Naive thymus-derived CD4-positive, alpha-beta T cell (primary cell): ENCODE measurements at regions of chr1 and their contacts with region 1.

Region 1: GRCh38 chr1:221741711-221742554 is at the start of gene DUSP10:
- DNase-seq: peak; percentile 88 to 100 (median 99)
- ATAC-seq: peak; percentile 91
- H3K4me3 ChIP-seq: peak within 1 kb of the TSS; percentile 85
- H3K4me3 Mint-ChIP-seq: peak within 1 kb of the TSS in 1 of 10 donors; percentile 33
- H3K27ac ChIP-seq: peak within 1 kb of the TSS; percentile 94
- H3K27ac Mint-ChIP-seq: peak within 1 kb of the TSS in 3 of 9 donors; percentile 39 to 83 (median 50)
- H3K4me1 ChIP-seq: peaks cover 9 to 17% of the 10 kb centered on the region in 2 donors
- H3K4me1 Mint-ChIP-seq: peaks cover 0 to 32% (median 21%) of the 10 kb centered on the region in 7 donors
- H3K27me3 ChIP-seq: no peaks in the 10 kb centered on the region
- H3K27me3 Mint-ChIP-seq: no peaks in the 10 kb centered on the region
- total RNA-seq, gene DUSP10: 2.5 to 60.6 (median 19.0) TPM

Region 2: GRCh38 chr1:221435504-221435904 is 306.4 kb before region 1 on chr1:
- CTCF ChIA-PET with region 1: no interaction called
- POLR2A ChIA-PET with region 1: no interaction called
- intact Hi-C with region 1: no loop called
- DNase-seq: peak in 6 of 9 donors; percentile 2 to 47 (median 26)
- ATAC-seq: peak; percentile 74
- H3K4me3 ChIP-seq: no peak overlapping the region
- H3K4me3 Mint-ChIP-seq: no peak overlapping the region
- H3K27ac ChIP-seq: no peak overlapping the region
- H3K27ac Mint-ChIP-seq: no peak overlapping the region
- H3K4me1 ChIP-seq: no peaks in the 10 kb centered on the region
- H3K4me1 Mint-ChIP-seq: peaks cover 0 to 27% (median 7%) of the 10 kb centered on the region in 7 donors
- H3K27me3 ChIP-seq: no peaks in the 10 kb centered on the region
- H3K27me3 Mint-ChIP-seq: peaks cover 2 to 22% (median 17%) of the 10 kb centered on the region in 5 donors

Region 3: GRCh38 chr1:221478050-221478949 is 263.6 kb before region 1 on chr1:
- CTCF ChIA-PET with region 1: interaction called, 4 read pairs
- POLR2A ChIA-PET with region 1: no interaction called
- intact Hi-C with region 1: loop called (anchors 1 kb)
- DNase-seq: peak; percentile 7 to 46 (median 31)
- ATAC-seq: peak; percentile 82
- H3K4me3 ChIP-seq: no peak overlapping the region
- H3K4me3 Mint-ChIP-seq: no peak overlapping the region
- H3K27ac ChIP-seq: no peak overlapping the region
- H3K27ac Mint-ChIP-seq: no peak overlapping the region
- H3K4me1 ChIP-seq: no peaks in the 10 kb centered on the region
- H3K4me1 Mint-ChIP-seq: peaks cover 0 to 5% (median 0%) of the 10 kb centered on the region in 7 donors
- H3K27me3 ChIP-seq: no peaks in the 10 kb centered on the region
- H3K27me3 Mint-ChIP-seq: peaks cover 0 to 15% (median 4%) of the 10 kb centered on the region in 5 donors

Region 4: GRCh38 chr1:221725735-221726672 is 15.9 kb before region 1 on chr1:
- CTCF ChIA-PET with region 1: interaction called, 7 read pairs
- POLR2A ChIA-PET with region 1: interaction called, 62 read pairs
- intact Hi-C with region 1: loop called (anchors 1 kb)
- DNase-seq: peak in 4 of 9 donors; percentile 29 to 47 (median 39)
- ATAC-seq: peak; percentile 61
- H3K4me3 ChIP-seq: peak overlapping the region; percentile 11
- H3K4me3 Mint-ChIP-seq: peak overlapping the region in 9 of 10 donors; percentile 45 to 83 (median 72)
- H3K27ac ChIP-seq: peak overlapping the region; percentile 15
- H3K27ac Mint-ChIP-seq: peak overlapping the region; percentile 16 to 90 (median 74)
- H3K4me1 ChIP-seq: peaks cover 24 to 29% of the 10 kb centered on the region in 2 donors
- H3K4me1 Mint-ChIP-seq: peaks cover 39 to 74% (median 67%) of the 10 kb centered on the region in 7 donors
- H3K27me3 ChIP-seq: no peaks in the 10 kb centered on the region
- H3K27me3 Mint-ChIP-seq: no peaks in the 10 kb centered on the region

Region 5: GRCh38 chr1:221839796-221840395 is 98.0 kb after region 1 on chr1:
- CTCF ChIA-PET with region 1: no interaction called
- POLR2A ChIA-PET with region 1: interaction called, 3 read pairs
- intact Hi-C with region 1: loop called in 1 of 2 experiments (anchors 1 kb)
- DNase-seq: peak in 1 of 9 donors; percentile 55
- ATAC-seq: peak; percentile 89
- H3K4me3 ChIP-seq: no peak overlapping the region
- H3K4me3 Mint-ChIP-seq: peak overlapping the region in 1 of 10 donors; percentile 32
- H3K27ac ChIP-seq: no peak overlapping the region
- H3K27ac Mint-ChIP-seq: peak overlapping the region in 3 of 9 donors; percentile 38 to 49 (median 46)
- H3K4me1 ChIP-seq: peaks cover 0 to 17% of the 10 kb centered on the region in 2 donors
- H3K4me1 Mint-ChIP-seq: peaks cover 9 to 58% (median 13%) of the 10 kb centered on the region in 7 donors
- H3K27me3 ChIP-seq: no peaks in the 10 kb centered on the region
- H3K27me3 Mint-ChIP-seq: peaks cover 0 to 9% (median 4%) of the 10 kb centered on the region in 5 donors

Region 6: DNA sequence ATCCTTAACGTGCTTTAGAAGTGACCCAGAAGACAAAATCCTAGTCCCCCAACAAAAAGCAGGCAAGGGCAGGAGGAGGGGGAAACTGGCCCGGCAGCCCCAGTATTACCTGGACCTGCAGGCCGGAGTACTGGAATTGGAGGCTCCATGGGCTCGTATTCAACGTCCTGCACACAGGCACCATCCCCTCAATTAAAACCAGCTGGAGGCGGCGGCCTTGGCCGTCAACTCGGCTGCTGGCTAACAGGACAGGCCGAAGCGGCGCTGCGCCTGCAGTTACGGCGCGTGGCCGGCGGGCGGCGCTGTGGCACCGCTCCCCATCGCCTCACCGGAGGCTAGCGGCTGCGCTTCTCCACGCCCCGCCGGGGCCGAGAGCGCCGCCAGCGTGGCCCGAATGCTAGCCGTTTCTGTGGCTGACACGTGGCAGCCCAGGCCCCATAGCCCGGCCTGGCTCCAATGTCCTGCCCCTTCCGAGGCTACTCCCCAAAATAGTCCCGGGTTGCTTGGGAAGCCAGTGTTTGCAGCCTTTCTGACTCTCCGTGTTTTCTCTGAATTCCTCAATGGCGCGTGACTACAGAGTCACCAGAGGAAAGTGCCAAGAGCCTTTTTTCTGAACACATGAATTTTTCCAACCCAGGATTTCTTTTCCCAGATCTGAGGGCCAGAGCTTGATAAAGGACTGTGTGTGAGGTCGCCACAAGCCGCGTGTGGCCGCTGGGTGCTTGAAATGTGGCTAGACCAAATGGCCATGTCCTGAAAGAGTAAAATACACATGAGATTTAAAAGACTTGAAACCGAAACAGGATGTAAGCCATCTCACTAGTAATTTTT is 723.5 kb after region 1 on chr1:
- CTCF ChIA-PET with region 1: no interaction called
- POLR2A ChIA-PET with region 1: no interaction called
- intact Hi-C with region 1: loop called in 1 of 2 experiments (anchors 2 kb)
- DNase-seq: peak; percentile 57 to 89 (median 84)
- ATAC-seq: peak; percentile 99
- H3K4me3 ChIP-seq: peak overlapping the region; percentile 86
- H3K4me3 Mint-ChIP-seq: peak overlapping the region; percentile 79 to 92 (median 86)
- H3K27ac ChIP-seq: peak overlapping the region; percentile 64
- H3K27ac Mint-ChIP-seq: peak overlapping the region; percentile 80 to 96 (median 90)
- H3K4me1 ChIP-seq: peaks cover 5 to 6% of the 10 kb centered on the region in 2 donors
- H3K4me1 Mint-ChIP-seq: peaks cover 11 to 25% (median 13%) of the 10 kb centered on the region in 7 donors
- H3K27me3 ChIP-seq: no peaks in the 10 kb centered on the region
- H3K27me3 Mint-ChIP-seq: peaks cover 0 to 18% (median 0%) of the 10 kb centered on the region in 5 donors

Region 7: GRCh38 chr1:222814536-222815439 is 1072.9 kb after region 1 on chr1 and contains the start of gene DISP1:
- CTCF ChIA-PET with region 1: no interaction called
- POLR2A ChIA-PET with region 1: no interaction called
- intact Hi-C with region 1: loop called in 1 of 2 experiments (anchors 10 kb)
- DNase-seq: peak; percentile 46 to 71 (median 60)
- ATAC-seq: peak; percentile 90
- H3K4me3 ChIP-seq: peak within 1 kb of the TSS; percentile 77
- H3K4me3 Mint-ChIP-seq: peak within 1 kb of the TSS; percentile 87 to 97 (median 95)
- H3K27ac ChIP-seq: peak within 1 kb of the TSS; percentile 78
- H3K27ac Mint-ChIP-seq: peak within 1 kb of the TSS; percentile 79 to 96 (median 89)
- H3K4me1 ChIP-seq: no peaks in the 10 kb centered on the region
- H3K4me1 Mint-ChIP-seq: peaks cover 17 to 37% (median 29%) of the 10 kb centered on the region in 7 donors
- H3K27me3 ChIP-seq: no peaks in the 10 kb centered on the region
- H3K27me3 Mint-ChIP-seq: peaks cover 0 to 13% (median 0%) of the 10 kb centered on the region in 5 donors
- total RNA-seq, gene DISP1: 1.7 to 4.6 (median 3.0) TPM